ENCODE measurements at regions of chr9 and their contacts with region 1.

Region 1: DNA sequence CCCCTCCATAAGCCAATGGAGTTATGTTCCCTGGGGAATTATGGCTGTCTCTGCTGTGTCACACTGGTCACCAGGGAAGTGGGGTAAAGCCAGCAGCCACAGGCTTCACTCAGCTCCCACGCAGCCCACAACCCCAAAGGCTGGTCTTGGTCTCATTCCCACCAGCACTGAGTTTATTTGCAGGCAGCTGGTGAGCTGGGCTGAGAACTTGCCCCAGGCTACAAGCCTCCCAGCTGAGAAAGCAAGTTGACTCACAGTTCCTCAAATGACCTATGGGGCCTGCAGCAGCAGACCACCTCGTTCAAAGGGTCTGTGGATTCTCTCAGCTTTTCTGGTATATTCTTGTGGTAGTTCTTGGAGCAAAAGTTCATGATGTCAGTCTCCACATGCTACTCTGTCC is 468.4 kb downstream of the ELAVL2 start:
- DNase-seq: no peak

Region 2: DNA sequence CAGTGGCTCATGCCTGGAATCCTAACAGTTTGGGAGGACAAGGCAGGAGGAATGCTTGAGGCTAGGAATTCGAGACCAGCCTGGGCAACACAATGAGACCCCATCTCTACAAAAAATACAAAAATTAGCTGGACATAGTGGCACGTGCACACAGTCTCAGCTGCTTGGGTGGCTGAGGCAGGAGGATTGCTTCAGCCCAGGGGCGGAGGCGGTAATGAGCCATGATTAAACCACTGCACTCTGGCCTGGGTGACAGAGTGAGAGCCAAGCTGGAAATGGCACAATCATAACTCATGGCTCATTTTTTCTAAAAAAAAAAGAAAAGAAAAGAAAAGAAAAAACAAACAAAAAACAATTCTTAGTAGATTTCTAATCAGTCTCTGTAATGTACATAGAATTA is 22.2 kb after region 1 on chr9:
- intact Hi-C with region 1: loop called (anchors 1 kb)
- DNase-seq: no peak

Region 3: GRCh38 chr9:23412458-23412857 is 54.8 kb after region 1 on chr9:
- intact Hi-C with region 1: no loop called
- DNase-seq: no peak